A549 (cell line): ENCODE measurements at regions of chr12 and their contacts with region 1.

Region 1: DNA sequence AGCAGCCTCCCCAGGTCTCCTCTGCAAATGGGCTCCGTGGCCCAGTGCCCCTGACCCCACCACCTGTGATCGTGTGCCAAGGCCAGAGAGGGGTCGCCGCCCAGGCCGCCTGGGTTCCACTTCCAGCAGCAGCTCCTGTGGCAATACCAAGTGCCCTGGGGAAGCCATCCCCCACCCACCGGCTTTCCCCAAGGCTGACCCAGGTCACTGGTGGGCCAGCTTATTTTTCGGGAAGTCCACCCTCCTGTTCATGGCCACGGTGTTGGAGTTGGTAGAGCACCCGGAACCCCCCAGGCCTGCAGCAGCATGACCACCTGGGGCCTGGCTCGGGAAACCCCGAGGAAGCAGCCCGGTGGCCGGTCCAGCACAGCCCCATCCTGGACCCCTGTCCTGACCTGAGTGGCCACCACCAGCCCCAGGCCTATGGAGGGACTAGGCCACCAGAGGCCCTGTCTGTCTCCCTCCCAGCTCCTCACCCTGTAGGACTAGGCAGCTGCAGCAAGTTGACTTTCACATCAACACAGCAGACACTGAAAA is 40.8 kb upstream of the OASL start:
- DNase-seq: no peak
- ATAC-seq: peak in 1 of 2 experiments; percentile 24; a peak in 4 of 6 replicates
- H3K4me3 ChIP-seq: no peak overlapping the region
- H3K27ac ChIP-seq: no peak overlapping the region
- H3K4me1 ChIP-seq: no peaks in the 10 kb centered on the region
- CTCF ChIP-seq: no peak
- EP300 ChIP-seq: no peak
- POLR2A ChIP-seq: no peak
- RAD21 ChIP-seq: no peak

Region 2: GRCh38 chr12:121060149-121061001 is 19.4 kb before region 1 on chr12:
- CTCF ChIA-PET with region 1: interaction called, 10 read pairs
- POLR2A ChIA-PET with region 1: no interaction called
- DNase-seq: peak; percentile 38 to 76
- ATAC-seq: peak; percentile 86 to 88
- H3K4me3 ChIP-seq: 0 out of 3 replicates have a peak overlapping the region, but pooled peaks have one; percentile 11
- H3K27ac ChIP-seq: peak overlapping the region; percentile 48 to 84; a peak in 5 of 6 replicates
- H3K4me1 ChIP-seq: peaks cover 6% of the 10 kb centered on the region; the same call in 1 of the 3 replicates
- CTCF ChIP-seq: peak; percentile 68
- EP300 ChIP-seq: no peak
- POLR2A ChIP-seq: no peak
- RAD21 ChIP-seq: peak; percentile 61 to 67